ENCODE measurements at regions of chr6 and their contacts with region 1.

Region 1: GRCh38 chr6:159693128-159693893 is at the start of gene SOD2:
- DNase-seq: peak; percentile 65 to 87 (median 80)
- H3K4me3 ChIP-seq: peak within 1 kb of the TSS; percentile 57 to 99 (median 92)
- H3K27ac ChIP-seq: peak within 1 kb of the TSS; percentile 66 to 100 (median 97)
- H3K27me3 ChIP-seq: no peaks in the 10 kb centered on the region
- CTCF ChIP-seq: peak in 13 of 56 donors; percentile 4 to 26 (median 14)
- total RNA-seq, gene SOD2: 175 to 1,346 (median 313) TPM

Region 2: GRCh38 chr6:159595173-159595572 is 98.1 kb before region 1 on chr6:
- intact Hi-C with region 1: no loop called
- DNase-seq: peak in 4 of 10 donors; percentile 26 to 56 (median 31)
- H3K4me3 ChIP-seq: peak overlapping the region in 4 of 59 donors; percentile 0 to 23 (median 6)
- H3K27ac ChIP-seq: peak overlapping the region in 7 of 59 donors; percentile 0 to 66 (median 11)
- H3K27me3 ChIP-seq: no peaks in the 10 kb centered on the region
- CTCF ChIP-seq: no peak

Region 3: GRCh38 chr6:159665868-159666635 is 27.3 kb before region 1 on chr6:
- intact Hi-C with region 1: no loop called
- DNase-seq: no peak
- H3K4me3 ChIP-seq: no peak overlapping the region
- H3K27ac ChIP-seq: no peak overlapping the region
- H3K27me3 ChIP-seq: no peaks in the 10 kb centered on the region
- CTCF ChIP-seq: no peak

Region 4: DNA sequence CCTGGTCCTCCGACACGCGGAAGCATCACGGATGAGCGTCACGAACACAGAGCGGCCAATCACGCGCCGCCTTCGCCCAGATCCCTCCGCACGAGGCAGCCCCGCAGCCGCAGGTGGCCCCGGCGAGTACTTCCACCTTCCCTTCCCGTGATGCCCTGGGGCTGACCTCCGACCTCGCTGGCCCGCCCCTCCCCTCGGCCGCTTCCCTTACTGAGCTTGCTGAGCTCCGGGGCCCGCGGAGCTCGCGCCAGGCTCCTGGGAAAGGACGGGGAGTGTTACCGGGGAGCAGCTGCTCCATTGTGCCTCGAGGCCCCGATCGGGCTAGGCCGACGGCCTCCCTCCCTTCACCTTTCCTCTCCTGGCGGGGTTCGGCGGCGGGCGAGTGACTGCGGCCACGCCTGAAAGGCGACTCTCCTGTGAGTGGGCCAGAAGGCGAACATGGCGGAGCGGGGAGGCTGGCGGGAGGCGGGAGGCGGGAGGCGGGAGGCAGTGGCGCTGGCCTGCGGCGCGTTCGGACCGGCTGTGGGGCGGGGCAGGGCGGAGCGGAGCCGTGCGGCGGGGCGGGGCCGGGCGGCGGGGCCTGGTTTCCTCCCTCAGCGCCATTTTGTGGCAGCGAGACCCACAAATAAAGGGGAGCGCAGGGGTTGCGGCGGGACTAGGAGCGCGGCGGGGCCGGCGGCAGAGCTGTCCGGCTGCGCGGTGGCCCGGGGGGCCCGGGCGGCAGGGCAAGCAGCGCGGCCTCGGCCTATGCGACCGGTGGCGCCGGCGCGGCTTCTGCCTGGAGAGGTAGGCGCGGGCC is 33.8 kb after region 1 on chr6 and contains the start of gene WTAP:
- intact Hi-C with region 1: loop called (anchors 1 kb)
- DNase-seq: peak; percentile 91 to 97 (median 93)
- H3K4me3 ChIP-seq: peak within 1 kb of the TSS; percentile 64 to 100 (median 94)
- H3K27ac ChIP-seq: peak within 1 kb of the TSS; percentile 89 to 100 (median 99)
- H3K27me3 ChIP-seq: no peaks in the 10 kb centered on the region
- CTCF ChIP-seq: peak in 14 of 56 donors; percentile 4 to 33 (median 16)
- total RNA-seq, gene WTAP: 54.0 to 94.6 (median 69.0) TPM

Region 5: GRCh38 chr6:159761873-159762680 is 68.8 kb after region 1 on chr6 and contains the start of gene ACAT2:
- intact Hi-C with region 1: loop called in 1 of 2 experiments (anchors 1 kb)
- DNase-seq: peak; percentile 96 to 99 (median 98)
- H3K4me3 ChIP-seq: peak within 1 kb of the TSS; percentile 63 to 100 (median 98)
- H3K27ac ChIP-seq: peak within 1 kb of the TSS; percentile 92 to 100 (median 100)
- H3K27me3 ChIP-seq: no peaks in the 10 kb centered on the region
- CTCF ChIP-seq: peak in 22 of 56 donors; percentile 3 to 42 (median 26)
- total RNA-seq, gene ACAT2: 15.6 to 93.3 (median 38.7) TPM

Region 6: GRCh38 chr6:159789377-159790148 is 96.3 kb after region 1 on chr6 and contains the start of gene TCP1:
- intact Hi-C with region 1: loop called (anchors 1 kb)
- DNase-seq: peak; percentile 98 to 100 (median 99)
- H3K4me3 ChIP-seq: peak within 1 kb of the TSS; percentile 74 to 100 (median 97)
- H3K27ac ChIP-seq: peak within 1 kb of the TSS; percentile 80 to 100 (median 99)
- H3K27me3 ChIP-seq: no peaks in the 10 kb centered on the region
- CTCF ChIP-seq: peak in 11 of 56 donors; percentile 7 to 33 (median 24)
- total RNA-seq, gene TCP1: 87.9 to 251 (median 152) TPM

Region 7: GRCh38 chr6:159852877-159853276 is 159.6 kb after region 1 on chr6:
- intact Hi-C with region 1: loop called (anchors 2 to 5 kb)
- DNase-seq: no peak
- H3K4me3 ChIP-seq: peak overlapping the region in 2 of 59 donors; percentile 14 to 17
- H3K27ac ChIP-seq: peak overlapping the region in 8 of 59 donors; percentile 4 to 69 (median 24)
- H3K27me3 ChIP-seq: no peaks in the 10 kb centered on the region
- CTCF ChIP-seq: peak in 43 of 56 donors; percentile 8 to 76 (median 41)

Region 8: GRCh38 chr6:159968440-159969203 is 275.3 kb after region 1 on chr6 and contains the start of gene IGF2R:
- intact Hi-C with region 1: loop called (anchors 10 kb)
- DNase-seq: peak; percentile 80 to 92 (median 89)
- H3K4me3 ChIP-seq: peak within 1 kb of the TSS; percentile 68 to 98 (median 91)
- H3K27ac ChIP-seq: peak within 1 kb of the TSS in 57 of 59 donors; percentile 18 to 94 (median 80)
- H3K27me3 ChIP-seq: no peaks in the 10 kb centered on the region
- CTCF ChIP-seq: peak in 22 of 56 donors; percentile 9 to 40 (median 25)
- total RNA-seq, gene IGF2R: 28.4 to 54.8 (median 42.0) TPM

Region 9: DNA sequence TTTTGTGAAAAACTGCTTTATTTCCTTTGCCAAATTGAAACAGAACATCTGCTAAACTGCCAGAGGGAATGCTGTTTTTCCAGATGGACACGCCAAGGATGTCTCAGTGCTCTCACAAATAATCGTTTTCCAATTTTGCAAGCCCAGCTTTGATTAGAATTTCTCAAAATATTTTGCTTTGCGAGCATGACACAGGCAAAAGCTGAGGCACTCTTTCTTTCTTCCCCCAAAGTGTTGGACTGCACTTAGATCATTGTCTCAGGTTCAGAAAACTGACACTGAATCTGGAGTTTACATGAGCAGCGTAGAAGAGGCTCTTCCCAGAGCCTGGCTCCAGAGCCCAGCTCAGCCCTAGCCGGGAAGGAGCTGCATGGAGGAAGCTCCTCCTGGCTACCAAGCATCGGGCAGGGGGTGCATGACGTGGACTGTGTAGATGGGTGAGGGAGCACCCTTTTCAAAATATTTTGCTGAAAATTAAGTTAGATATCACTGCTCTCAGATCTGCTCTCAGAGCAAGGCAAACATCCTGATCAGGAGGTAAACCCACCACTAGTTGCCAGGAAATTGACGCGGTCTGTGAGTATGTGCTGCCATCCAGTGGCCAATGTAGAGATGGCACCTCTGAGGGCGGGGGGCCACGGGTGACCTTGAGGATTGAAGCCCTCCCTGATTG is 762.4 kb after region 1 on chr6:
- intact Hi-C with region 1: loop called in 1 of 2 experiments (anchors 10 kb)
- DNase-seq: peak in 9 of 10 donors; percentile 12 to 77 (median 55)
- H3K4me3 ChIP-seq: peak overlapping the region in 49 of 59 donors; percentile 6 to 58 (median 32)
- H3K27ac ChIP-seq: peak overlapping the region in 16 of 59 donors; percentile 6 to 70 (median 45)
- H3K27me3 ChIP-seq: no peaks in the 10 kb centered on the region
- CTCF ChIP-seq: peak; percentile 73 to 99 (median 96)

Measured in dorsolateral prefrontal cortex (tissue), 120 donors.